Left ventricle myocardium superior (tissue), 1 donor: ENCODE measurements at regions of chr22 and their contacts with region 1.

Region 1: GRCh38 chr22:20271113-20271994 is 3.2 kb upstream of the RTN4R start:
- DNase-seq: no peak
- ATAC-seq: no peak

Region 2: DNA sequence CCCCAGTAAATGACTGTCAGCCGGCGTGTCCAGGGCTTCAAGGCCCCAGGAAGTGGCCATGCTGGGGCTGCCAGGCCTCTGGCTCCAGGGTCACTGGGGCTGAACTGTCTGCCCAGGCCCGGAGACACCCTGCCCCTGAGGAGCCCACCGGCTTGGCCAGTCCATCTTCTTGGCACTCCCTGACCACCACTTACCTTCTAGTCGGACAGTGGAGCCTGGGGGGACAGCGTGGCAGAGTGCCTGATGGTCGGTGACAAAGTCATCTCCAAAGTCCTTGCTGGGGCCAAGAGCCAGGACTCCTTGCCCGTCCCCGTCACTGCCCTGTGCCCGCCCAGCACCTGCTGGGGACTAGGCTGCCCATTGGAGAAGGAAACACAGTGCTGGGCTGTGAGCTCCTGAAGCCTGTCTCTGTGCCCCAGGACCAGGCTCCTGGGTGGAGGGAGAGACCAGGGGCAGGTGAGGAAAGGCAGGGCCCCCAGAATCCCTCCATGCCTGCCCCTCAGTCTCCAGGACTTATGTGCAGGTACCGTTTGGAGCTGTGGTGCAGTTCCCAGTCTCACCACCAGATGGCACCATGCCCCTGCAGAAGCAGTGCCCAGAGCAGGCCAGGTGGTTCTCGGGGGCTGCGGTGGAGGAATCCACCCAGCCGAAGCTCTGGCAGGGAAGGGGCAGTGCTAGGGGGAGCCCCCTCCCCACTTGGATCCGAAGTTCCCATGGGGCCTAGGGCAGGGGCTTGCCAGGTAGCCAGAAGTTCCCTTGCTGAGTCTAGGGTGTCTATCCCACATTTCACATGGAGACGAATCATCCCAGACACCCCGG is 114.5 kb before region 1 on chr22:
- intact Hi-C with region 1: loop called (anchors 5 kb)
- DNase-seq: peak; percentile 90
- ATAC-seq: peak; percentile 82

Region 3: DNA sequence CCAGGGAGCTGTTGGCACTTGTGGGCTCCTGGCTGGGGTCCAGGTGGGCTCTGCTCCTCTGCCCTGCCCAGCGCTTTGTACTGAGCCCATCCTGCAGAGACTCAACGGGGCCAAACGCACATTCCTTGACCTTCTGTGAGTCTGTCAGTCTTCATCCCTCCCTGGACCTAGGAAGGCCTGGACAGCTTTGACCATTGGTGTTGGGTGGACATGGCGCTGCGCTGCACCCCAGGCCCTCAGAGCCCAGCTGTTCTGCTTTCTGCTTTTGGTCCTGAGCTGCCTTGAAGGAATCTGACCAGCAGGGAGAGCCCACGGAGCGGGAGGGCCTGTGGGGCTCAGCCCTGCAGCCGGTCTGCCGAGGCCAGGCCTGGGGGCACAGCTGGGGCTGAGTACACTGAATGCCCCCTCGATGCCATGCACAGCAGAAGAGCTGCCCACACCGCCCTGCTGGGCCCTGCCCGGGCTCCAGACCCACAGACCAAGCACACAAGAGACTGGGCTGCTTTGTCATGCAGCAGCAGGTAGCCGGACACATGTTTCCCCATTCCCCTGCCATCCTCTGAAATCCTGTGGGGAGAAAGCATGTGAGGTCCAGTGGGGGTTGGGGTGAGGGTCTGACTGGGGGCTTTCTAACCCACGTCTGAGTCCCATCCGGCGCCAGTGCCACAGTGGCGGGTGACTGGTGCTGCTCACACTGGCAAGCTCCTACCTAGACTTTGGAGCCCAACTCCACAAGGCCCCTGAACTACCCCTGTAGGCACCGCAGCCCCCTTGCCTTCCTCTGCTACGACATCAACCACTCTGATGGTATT is 96.4 kb before region 1 on chr22:
- intact Hi-C with region 1: no loop called
- DNase-seq: no peak
- ATAC-seq: no peak

Region 4: DNA sequence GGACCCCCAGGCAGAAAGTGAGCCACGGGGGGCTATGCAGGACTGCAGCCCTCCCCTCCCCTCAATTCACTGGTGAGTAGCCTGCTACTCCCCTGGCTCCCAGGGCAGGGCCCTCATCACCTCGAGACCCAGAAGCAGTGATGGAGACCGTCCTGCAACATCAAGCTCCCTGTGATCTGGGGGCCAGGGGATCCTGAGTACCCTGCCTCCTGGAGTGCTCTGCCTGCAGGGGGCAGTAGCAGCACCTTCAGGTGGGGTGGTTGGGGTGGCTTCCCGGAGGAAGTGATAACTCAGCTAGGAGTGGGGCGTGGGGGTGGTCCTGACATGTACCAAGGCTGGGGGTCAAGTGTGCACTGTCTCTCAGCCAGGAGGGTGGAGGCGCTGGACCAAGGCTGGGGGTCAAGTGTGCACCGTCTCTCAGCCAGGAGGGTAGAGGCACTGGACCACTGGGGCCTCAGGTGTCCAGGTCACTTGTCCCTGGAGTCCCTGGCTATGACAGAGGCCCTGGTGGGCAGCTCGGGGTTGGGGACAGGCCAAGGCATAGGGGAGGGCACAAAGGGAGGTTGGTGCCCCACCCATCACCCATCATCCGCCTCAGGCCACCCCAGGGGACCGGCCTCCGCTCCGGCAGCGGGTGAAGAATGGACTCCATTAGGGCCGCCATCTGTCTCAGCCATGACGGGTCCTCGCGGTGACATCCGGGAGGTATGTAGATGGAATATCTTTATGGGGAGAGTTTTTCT is 12.6 kb before region 1 on chr22:
- intact Hi-C with region 1: no loop called
- DNase-seq: no peak
- ATAC-seq: no peak

Region 5: GRCh38 chr22:20405931-20406685 is 134.8 kb after region 1 on chr22:
- intact Hi-C with region 1: no loop called
- DNase-seq: no peak
- ATAC-seq: no peak